ENCODE measurements at regions of chr2 and their contacts with region 1.

Region 1: DNA sequence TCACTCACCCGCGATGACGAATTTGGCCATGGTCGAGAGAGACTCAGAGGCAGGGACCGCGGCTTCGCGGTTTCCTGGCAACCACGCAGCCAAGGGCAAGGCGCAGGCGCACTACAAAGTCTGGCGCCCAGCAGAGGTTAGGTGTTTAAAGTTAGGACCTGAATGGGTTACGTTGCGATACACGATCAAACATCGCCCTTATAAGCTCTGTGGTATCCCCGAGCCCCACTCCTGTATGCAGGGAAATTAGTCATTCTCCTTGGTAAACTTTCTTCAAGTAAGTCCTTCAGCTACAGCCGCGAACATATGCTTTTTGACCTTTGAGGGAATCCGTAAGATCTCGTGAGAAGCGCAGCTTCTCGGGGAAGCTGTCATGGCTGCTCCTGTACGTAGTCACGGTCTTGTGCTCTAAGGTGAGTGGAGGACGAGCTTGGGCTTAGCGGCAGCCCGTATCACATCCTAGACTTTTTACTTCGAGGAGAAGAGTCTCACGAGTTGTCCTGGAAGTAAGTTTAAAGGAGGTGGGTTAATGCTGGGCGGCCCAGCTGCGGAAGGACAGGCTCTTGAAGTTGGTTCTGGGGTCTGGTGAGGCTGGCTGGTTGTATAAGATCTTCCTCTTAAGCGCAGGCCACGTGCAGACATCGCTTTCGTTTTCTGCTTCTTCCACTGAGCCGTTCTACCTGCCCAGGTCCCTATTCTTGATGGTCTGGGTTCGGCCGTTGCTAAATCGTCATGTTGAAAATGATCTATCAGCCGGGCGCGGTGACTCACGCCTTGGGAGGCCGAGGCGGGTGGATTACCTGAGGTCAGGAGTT is at the starts of genes FASTKD2 and MDH1B:
- DNase-seq: peak; percentile 88 to 91 (median 89)
- H3K4me3 ChIP-seq: peak within 1 kb of the TSS; percentile 54 to 82
- H3K4me3 Mint-ChIP-seq: peak within 1 kb of the TSS; percentile 89 to 98 (median 95)
- H3K27ac ChIP-seq: peak within 1 kb of the TSS; percentile 91
- H3K27ac Mint-ChIP-seq: peak within 1 kb of the TSS; percentile 96 to 99 (median 97)
- H3K4me1 ChIP-seq: peaks cover 39% of the 10 kb centered on the region
- H3K4me1 Mint-ChIP-seq: peaks cover 20 to 45% (median 36%) of the 10 kb centered on the region in 4 donors
- H3K27me3 ChIP-seq: no peaks in the 10 kb centered on the region
- H3K27me3 Mint-ChIP-seq: no peaks in the 10 kb centered on the region
- total RNA-seq, gene FASTKD2: 23.0 to 23.4 TPM
- total RNA-seq, gene MDH1B: 0.17 TPM in 1 of 2 experiments, not detected in the other

Region 2: GRCh38 chr2:206085742-206086445 is 679.6 kb before region 1 on chr2 and contains the start of gene INO80D:
- CTCF ChIA-PET with region 1: no interaction called
- POLR2A ChIA-PET with region 1: interaction called, 6 read pairs
- intact Hi-C with region 1: loop called (anchors 10 kb)
- DNase-seq: peak; percentile 88 to 91 (median 89)
- H3K4me3 ChIP-seq: peak within 1 kb of the TSS; percentile 81 to 94
- H3K4me3 Mint-ChIP-seq: peak within 1 kb of the TSS; percentile 98 to 100 (median 99)
- H3K27ac ChIP-seq: peak within 1 kb of the TSS; percentile 98
- H3K27ac Mint-ChIP-seq: peak within 1 kb of the TSS; percentile 99 to 100 (median 100)
- H3K4me1 ChIP-seq: peaks cover 44% of the 10 kb centered on the region
- H3K4me1 Mint-ChIP-seq: peaks cover 24 to 54% (median 37%) of the 10 kb centered on the region in 4 donors
- H3K27me3 ChIP-seq: no peaks in the 10 kb centered on the region
- H3K27me3 Mint-ChIP-seq: no peaks in the 10 kb centered on the region
- total RNA-seq, gene INO80D: 40.2 to 41.3 TPM

Region 3: GRCh38 chr2:206531996-206532543 is 233.4 kb before region 1 on chr2:
- CTCF ChIA-PET with region 1: no interaction called
- POLR2A ChIA-PET with region 1: no interaction called
- intact Hi-C with region 1: loop called (anchors 1 kb)
- DNase-seq: no peak
- H3K4me3 ChIP-seq: no peak overlapping the region
- H3K4me3 Mint-ChIP-seq: peak overlapping the region in 1 of 8 donors; percentile 18
- H3K27ac ChIP-seq: no peak overlapping the region
- H3K27ac Mint-ChIP-seq: peak overlapping the region; percentile 2 to 85 (median 31)
- H3K4me1 ChIP-seq: peaks cover 18% of the 10 kb centered on the region
- H3K4me1 Mint-ChIP-seq: peaks cover 19 to 55% (median 35%) of the 10 kb centered on the region in 4 donors
- H3K27me3 ChIP-seq: no peaks in the 10 kb centered on the region
- H3K27me3 Mint-ChIP-seq: peaks cover 0 to 3% of the 10 kb centered on the region in 2 donors

Region 4: DNA sequence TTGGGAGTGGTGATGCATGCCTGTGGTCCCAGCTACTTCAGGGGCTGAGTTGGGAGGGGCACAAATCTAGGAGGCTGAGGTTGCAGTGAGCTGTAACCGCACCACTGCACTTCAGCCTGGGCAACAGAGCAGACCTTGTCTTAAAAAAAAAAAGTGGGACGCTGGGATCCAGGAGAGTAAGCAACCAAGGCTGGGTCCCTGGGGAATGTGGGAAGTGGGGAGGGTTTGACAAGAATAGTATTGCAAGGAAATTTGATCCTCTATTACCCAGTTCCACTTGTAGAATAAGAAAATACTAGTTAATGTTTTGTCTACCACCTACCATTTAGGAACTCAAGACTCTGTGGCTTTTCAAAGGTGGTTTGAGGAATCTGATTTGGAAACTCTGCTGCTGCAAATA is 26.2 kb before region 1 on chr2:
- CTCF ChIA-PET with region 1: no interaction called
- POLR2A ChIA-PET with region 1: no interaction called
- intact Hi-C with region 1: no loop called
- DNase-seq: no peak
- H3K4me3 ChIP-seq: no peak overlapping the region
- H3K4me3 Mint-ChIP-seq: no peak overlapping the region
- H3K27ac ChIP-seq: no peak overlapping the region
- H3K27ac Mint-ChIP-seq: no peak overlapping the region
- H3K4me1 ChIP-seq: no peaks in the 10 kb centered on the region
- H3K4me1 Mint-ChIP-seq: no peaks in the 10 kb centered on the region
- H3K27me3 ChIP-seq: no peaks in the 10 kb centered on the region
- H3K27me3 Mint-ChIP-seq: peaks cover 11 to 15% of the 10 kb centered on the region in 2 donors

Region 5: GRCh38 chr2:206805887-206806607 is 40.6 kb after region 1 on chr2:
- CTCF ChIA-PET with region 1: no interaction called
- POLR2A ChIA-PET with region 1: no interaction called
- intact Hi-C with region 1: no loop called
- DNase-seq: no peak
- H3K4me3 ChIP-seq: no peak overlapping the region
- H3K4me3 Mint-ChIP-seq: no peak overlapping the region
- H3K27ac ChIP-seq: no peak overlapping the region
- H3K27ac Mint-ChIP-seq: no peak overlapping the region
- H3K4me1 ChIP-seq: no peaks in the 10 kb centered on the region
- H3K4me1 Mint-ChIP-seq: no peaks in the 10 kb centered on the region
- H3K27me3 ChIP-seq: no peaks in the 10 kb centered on the region
- H3K27me3 Mint-ChIP-seq: no peaks in the 10 kb centered on the region

Region 6: GRCh38 chr2:207143215-207144172 is 378.0 kb after region 1 on chr2:
- CTCF ChIA-PET with region 1: no interaction called
- POLR2A ChIA-PET with region 1: no interaction called
- intact Hi-C with region 1: no loop called
- DNase-seq: peak; percentile 74 to 85 (median 77)
- H3K4me3 ChIP-seq: peak overlapping the region in 1 of 2 donors; percentile 15
- H3K4me3 Mint-ChIP-seq: peak overlapping the region; percentile 66 to 84 (median 74)
- H3K27ac ChIP-seq: peak overlapping the region; percentile 69
- H3K27ac Mint-ChIP-seq: peak overlapping the region; percentile 84 to 96 (median 93)
- H3K4me1 ChIP-seq: peaks cover 58% of the 10 kb centered on the region
- H3K4me1 Mint-ChIP-seq: peaks cover 48 to 81% (median 67%) of the 10 kb centered on the region in 4 donors
- H3K27me3 ChIP-seq: no peaks in the 10 kb centered on the region
- H3K27me3 Mint-ChIP-seq: no peaks in the 10 kb centered on the region

Region 7: GRCh38 chr2:208025037-208025813 is 1259.8 kb after region 1 on chr2 and contains the start of gene PLEKHM3:
- CTCF ChIA-PET with region 1: no interaction called
- POLR2A ChIA-PET with region 1: no interaction called
- intact Hi-C with region 1: loop called (anchors 5 kb)
- DNase-seq: peak; percentile 43 to 69 (median 61)
- H3K4me3 ChIP-seq: peak within 1 kb of the TSS; percentile 83 to 92
- H3K4me3 Mint-ChIP-seq: peak within 1 kb of the TSS; percentile 90 to 98 (median 93)
- H3K27ac ChIP-seq: peak within 1 kb of the TSS; percentile 71
- H3K27ac Mint-ChIP-seq: peak within 1 kb of the TSS; percentile 45 to 96 (median 95)
- H3K4me1 ChIP-seq: peaks cover 14% of the 10 kb centered on the region
- H3K4me1 Mint-ChIP-seq: peaks cover 14 to 28% (median 19%) of the 10 kb centered on the region in 4 donors
- H3K27me3 ChIP-seq: no peaks in the 10 kb centered on the region
- H3K27me3 Mint-ChIP-seq: no peaks in the 10 kb centered on the region
- total RNA-seq, gene PLEKHM3: 14.7 to 16.1 TPM

Region 8: DNA sequence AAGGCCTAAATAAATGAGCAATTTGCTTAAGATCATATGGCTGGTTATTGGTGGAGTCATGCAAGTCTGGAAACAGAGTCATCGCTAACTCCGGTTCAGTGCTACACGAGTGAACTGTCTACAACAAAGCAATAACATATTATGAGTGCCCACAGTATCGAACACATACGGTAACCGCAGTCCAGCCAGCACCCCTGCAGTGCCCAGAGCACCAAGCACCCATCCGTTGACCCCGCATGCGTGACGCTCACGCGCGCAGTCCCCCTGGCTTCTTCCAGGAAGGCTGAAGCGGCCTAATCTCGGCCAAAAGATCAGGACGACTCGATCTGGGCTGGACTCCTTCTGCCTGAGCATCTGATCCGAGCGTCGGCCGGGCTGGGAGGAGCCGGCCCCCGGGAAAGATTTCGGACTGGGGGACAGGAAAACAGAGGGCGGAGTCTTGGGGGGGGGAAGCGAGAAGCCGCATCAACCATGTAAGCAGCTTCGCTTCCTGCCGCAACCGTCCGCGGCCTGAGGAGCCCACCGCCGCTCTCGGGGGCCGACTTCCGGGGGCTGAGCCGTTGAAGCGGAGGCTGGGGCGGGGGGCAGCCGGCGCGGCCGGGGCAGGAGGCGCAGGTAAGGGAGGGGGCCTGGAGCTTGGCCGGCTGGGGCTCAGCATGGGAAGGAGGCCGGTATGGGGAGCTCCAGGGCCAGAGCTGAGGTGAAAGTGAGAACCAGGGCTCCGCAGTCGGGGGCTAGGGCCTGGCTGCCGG is 1500.5 kb after region 1 on chr2 and contains the start of gene PIKFYVE:
- CTCF ChIA-PET with region 1: no interaction called
- POLR2A ChIA-PET with region 1: interaction called, 3 read pairs
- intact Hi-C with region 1: loop called (anchors 5 kb)
- DNase-seq: peak; percentile 80 to 92 (median 87)
- H3K4me3 ChIP-seq: peak within 1 kb of the TSS; percentile 51 to 95
- H3K4me3 Mint-ChIP-seq: peak within 1 kb of the TSS; percentile 92 to 99 (median 96)
- H3K27ac ChIP-seq: peak within 1 kb of the TSS; percentile 75
- H3K27ac Mint-ChIP-seq: peak within 1 kb of the TSS; percentile 86 to 97 (median 95)
- H3K4me1 ChIP-seq: peaks cover 46% of the 10 kb centered on the region
- H3K4me1 Mint-ChIP-seq: peaks cover 27 to 60% (median 39%) of the 10 kb centered on the region in 4 donors
- H3K27me3 ChIP-seq: no peaks in the 10 kb centered on the region
- H3K27me3 Mint-ChIP-seq: no peaks in the 10 kb centered on the region
- total RNA-seq, gene PIKFYVE: 44.5 to 45.8 TPM